PC-9 (cell line): ENCODE measurements at regions of chr17 and their contacts with region 1.

Region 1: DNA sequence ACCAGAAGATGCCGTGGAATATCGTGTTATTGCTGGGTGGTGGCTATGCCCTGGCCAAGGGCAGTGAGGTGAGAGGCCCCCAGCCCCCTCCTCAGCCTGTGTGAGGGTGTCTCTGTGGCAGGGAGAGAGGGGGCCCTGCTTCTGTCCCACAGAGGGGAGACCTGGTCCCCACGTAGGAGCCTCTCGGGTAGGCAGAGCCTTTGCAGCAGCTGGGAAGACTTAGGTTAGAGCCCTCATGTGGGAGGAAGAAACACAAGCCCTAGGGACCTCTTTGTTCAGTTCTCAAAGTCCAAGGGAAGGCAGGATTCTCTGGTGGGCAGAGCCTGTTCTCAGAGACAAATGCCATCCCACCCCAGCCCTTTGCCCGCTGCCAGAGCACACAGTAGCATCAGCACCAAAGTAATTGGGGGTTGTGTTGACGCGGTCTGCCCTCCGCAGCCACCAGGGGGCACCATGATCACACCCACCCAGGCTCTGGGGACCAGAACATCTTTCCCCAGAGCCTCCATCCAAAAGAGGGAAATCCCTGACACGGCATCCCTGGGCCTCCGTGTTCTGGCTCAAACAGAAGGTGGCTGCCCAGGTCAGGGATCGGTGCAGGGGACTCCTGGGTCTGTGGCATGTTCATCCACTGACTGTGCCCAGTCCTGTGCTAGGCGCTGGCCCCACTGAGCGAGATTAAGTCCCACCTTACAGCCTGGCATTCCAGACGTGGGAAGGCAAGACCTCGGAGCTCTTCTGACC is 11.5 kb upstream of the FOXN1 start:
- DNase-seq: peak; percentile 45 to 76
- H3K4me3 ChIP-seq: no peak overlapping the region
- H3K27ac ChIP-seq: no peak overlapping the region
- H3K4me1 ChIP-seq: peaks cover 14% of the 10 kb centered on the region; the same call in 1 of the 2 replicates
- H3K27me3 ChIP-seq: peaks cover 24% of the 10 kb centered on the region; the same call in 1 of the 2 replicates
- CTCF ChIP-seq: peak; percentile 91

Region 2: DNA sequence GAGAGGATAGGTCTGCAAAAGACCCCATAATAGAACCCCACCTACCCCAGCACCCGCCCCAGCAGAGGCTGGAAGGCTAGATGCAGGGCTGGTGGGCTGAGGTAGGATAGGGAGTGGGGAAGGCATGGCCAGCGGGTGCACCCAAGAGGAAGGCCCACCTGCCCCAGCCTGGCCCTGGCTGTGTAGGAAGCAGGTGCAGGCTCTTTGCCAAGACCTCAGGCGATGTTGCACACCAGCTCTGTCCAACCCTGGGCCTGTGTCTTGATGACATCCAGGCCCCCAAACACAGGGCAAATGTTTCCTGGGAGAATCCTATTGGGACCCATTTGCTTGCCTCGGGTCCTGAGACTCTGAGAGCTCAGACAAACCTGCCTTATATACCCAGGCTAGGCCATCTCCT is 45.6 kb after region 1 on chr17:
- CTCF ChIA-PET with region 1: no interaction called
- POLR2A ChIA-PET with region 1: no interaction called
- intact Hi-C with region 1: loop called (anchors 1 kb)
- DNase-seq: no peak
- H3K4me3 ChIP-seq: no peak overlapping the region
- H3K27ac ChIP-seq: no peak overlapping the region
- H3K4me1 ChIP-seq: no peaks in the 10 kb centered on the region
- H3K27me3 ChIP-seq: 0 out of 2 replicates have a peak, but pooled peaks cover 4% of the 10 kb centered on the region
- CTCF ChIP-seq: no peak

Region 3: DNA sequence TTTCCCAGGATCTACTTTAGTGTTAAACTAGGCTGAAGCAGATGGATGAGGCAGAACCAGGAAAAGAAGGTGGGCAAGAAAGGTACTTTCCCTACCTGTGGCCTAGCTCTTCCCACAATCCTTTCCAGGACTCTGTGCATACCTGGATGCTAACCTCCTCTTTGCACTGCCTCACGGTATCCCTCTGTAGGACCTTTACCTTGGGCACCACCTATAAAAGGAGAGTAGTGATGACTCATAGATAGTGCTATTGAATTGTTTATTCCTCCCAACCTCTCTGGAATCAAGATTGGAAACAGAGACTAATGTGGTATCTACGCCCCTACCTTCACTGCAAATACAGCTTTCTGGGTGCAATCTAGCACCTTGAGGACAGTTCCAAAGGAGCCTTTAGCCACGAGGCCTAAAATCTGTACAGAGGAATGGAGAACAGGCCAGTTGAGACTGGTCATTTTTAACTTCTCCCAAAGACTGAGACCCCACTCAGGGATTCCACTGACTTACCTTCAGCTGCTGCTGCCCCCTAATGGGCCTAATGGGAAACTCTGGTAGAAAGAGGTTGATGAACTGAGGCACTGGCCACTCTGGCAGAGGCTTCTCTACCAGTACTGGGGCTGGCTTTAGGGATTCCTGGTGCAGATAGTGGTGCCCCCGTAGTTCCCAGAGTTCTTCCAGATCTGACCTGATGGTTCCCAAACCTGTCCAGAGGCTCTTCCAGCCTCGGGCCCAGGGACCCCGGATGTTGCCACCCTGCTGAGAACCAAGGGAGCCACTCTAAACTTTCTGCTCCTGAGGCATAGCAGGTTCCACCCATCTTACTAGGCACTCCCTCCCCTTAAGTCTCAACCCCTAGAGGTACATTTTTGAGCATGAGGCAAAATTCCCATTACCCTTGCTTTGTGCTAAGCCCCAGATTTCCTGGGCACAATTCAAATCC is 118.6 kb after region 1 on chr17:
- CTCF ChIA-PET with region 1: no interaction called
- POLR2A ChIA-PET with region 1: no interaction called
- intact Hi-C with region 1: loop called (anchors 1 kb)
- DNase-seq: peak in 1 of 2 experiments; percentile 25
- H3K4me3 ChIP-seq: no peak overlapping the region
- H3K27ac ChIP-seq: no peak overlapping the region
- H3K4me1 ChIP-seq: no peaks in the 10 kb centered on the region
- H3K27me3 ChIP-seq: no peaks in the 10 kb centered on the region
- CTCF ChIP-seq: peak; percentile 66

Region 4: GRCh38 chr17:28710861-28711722 is 216.5 kb after region 1 on chr17:
- CTCF ChIA-PET with region 1: no interaction called
- POLR2A ChIA-PET with region 1: no interaction called
- intact Hi-C with region 1: no loop called
- DNase-seq: peak; percentile 66 to 95
- H3K4me3 ChIP-seq: peak overlapping the region; percentile 82
- H3K27ac ChIP-seq: peak overlapping the region; percentile 17; the same call in 1 of the 2 replicates
- H3K4me1 ChIP-seq: peaks cover 14% of the 10 kb centered on the region
- H3K27me3 ChIP-seq: no peaks in the 10 kb centered on the region
- CTCF ChIP-seq: no peak

Region 5: GRCh38 chr17:28777178-28777577 is 282.6 kb after region 1 on chr17:
- CTCF ChIA-PET with region 1: interaction called, 13 read pairs
- POLR2A ChIA-PET with region 1: no interaction called
- intact Hi-C with region 1: no loop called
- DNase-seq: no peak
- H3K4me3 ChIP-seq: no peak overlapping the region
- H3K27ac ChIP-seq: peak overlapping the region; percentile 7; the same call in 1 of the 2 replicates
- H3K4me1 ChIP-seq: no peaks in the 10 kb centered on the region
- H3K27me3 ChIP-seq: no peaks in the 10 kb centered on the region
- CTCF ChIP-seq: no peak